CD4-positive, alpha-beta T cell (primary cell): ENCODE measurements at regions of chr14 and their contacts with region 1.

Region 1: GRCh38 chr14:73728717-73729330 is 14.6 kb upstream of the PNMA1 start:
- DNase-seq: peak; percentile 78 to 95 (median 88)
- ATAC-seq: peak; percentile 93
- H3K4me3 ChIP-seq: no peak overlapping the region
- H3K4me3 Mint-ChIP-seq: peak overlapping the region; percentile 21
- H3K27ac ChIP-seq: peak overlapping the region in 1 of 2 donors; percentile 22
- H3K27ac Mint-ChIP-seq: peak overlapping the region; percentile 84
- H3K4me1 ChIP-seq: peaks cover 36% of the 10 kb centered on the region
- H3K4me1 Mint-ChIP-seq: peaks cover 20% of the 10 kb centered on the region
- H3K27me3 ChIP-seq: no peaks in the 10 kb centered on the region
- H3K27me3 Mint-ChIP-seq: no peaks in the 10 kb centered on the region
- CTCF ChIP-seq: peak; percentile 94

Region 2: GRCh38 chr14:73713803-73714655 is 14.8 kb before region 1 on chr14 and contains the start of gene PNMA1:
- CTCF ChIA-PET with region 1: interaction called, 11 read pairs
- POLR2A ChIA-PET with region 1: interaction called, 4 read pairs
- intact Hi-C with region 1: no loop called
- DNase-seq: peak; percentile 75 to 95 (median 82)
- ATAC-seq: peak; percentile 68
- H3K4me3 ChIP-seq: peak within 1 kb of the TSS; percentile 87
- H3K4me3 Mint-ChIP-seq: peak within 1 kb of the TSS; percentile 96
- H3K27ac ChIP-seq: peak within 1 kb of the TSS; percentile 73 to 77
- H3K27ac Mint-ChIP-seq: peak within 1 kb of the TSS; percentile 92
- H3K4me1 ChIP-seq: peaks cover 33% of the 10 kb centered on the region
- H3K4me1 Mint-ChIP-seq: peaks cover 33% of the 10 kb centered on the region
- H3K27me3 ChIP-seq: no peaks in the 10 kb centered on the region
- H3K27me3 Mint-ChIP-seq: no peaks in the 10 kb centered on the region
- CTCF ChIP-seq: no peak
- total RNA-seq, gene PNMA1: 52.6 to 55.9 TPM

Region 3: DNA sequence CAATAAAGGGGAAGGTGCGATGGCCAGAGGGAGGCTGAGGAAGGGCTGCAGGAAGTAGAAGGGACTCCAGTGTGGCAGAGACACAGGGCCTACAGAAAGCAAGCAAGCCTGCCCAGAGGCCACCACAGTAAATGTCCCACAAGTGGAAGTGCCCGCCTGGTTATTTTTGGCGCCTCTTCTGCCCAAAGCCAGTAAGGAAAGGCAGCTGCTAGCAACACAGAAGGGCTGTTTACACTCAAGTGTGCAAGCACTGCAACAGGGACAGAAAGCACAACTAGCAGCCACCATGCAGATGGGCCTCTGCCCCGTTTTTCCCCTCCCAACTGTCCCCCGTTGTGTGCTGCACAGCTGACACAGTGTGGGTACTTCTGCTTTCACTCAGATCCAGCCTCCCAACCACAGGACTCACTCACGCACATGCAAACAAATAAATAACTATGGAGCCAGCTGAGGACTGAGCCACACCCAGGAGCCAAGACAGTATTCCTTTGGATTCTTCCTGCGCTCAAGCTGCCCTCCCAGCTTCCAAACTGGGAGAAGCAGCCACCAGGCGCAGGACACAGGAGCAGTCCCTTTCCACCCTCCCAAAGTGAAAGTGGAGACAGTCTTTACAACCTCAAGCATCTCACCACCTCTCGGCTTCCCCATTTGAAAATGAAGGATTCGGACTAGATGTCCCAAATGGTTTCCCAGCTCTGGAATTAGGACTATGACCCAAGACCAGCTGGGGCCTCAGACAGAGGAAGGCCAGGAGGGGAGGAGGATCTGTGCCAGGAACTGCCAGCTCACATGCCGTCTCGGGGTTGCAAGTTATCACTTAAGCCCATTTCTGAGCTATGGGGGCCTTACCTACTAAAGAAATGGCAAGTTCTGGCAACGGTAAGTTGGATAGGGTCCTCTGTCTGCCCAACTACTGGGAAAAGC is 25.4 kb after region 1 on chr14:
- CTCF ChIA-PET with region 1: interaction called, 30 read pairs
- POLR2A ChIA-PET with region 1: interaction called, 25 read pairs
- intact Hi-C with region 1: loop called (anchors 1 to 2 kb)
- DNase-seq: peak in 5 of 14 experiments; percentile 34 to 77 (median 45)
- ATAC-seq: peak; percentile 14
- H3K4me3 ChIP-seq: peak overlapping the region; percentile 57
- H3K4me3 Mint-ChIP-seq: peak overlapping the region; percentile 88
- H3K27ac ChIP-seq: peak overlapping the region; percentile 85 to 88
- H3K27ac Mint-ChIP-seq: peak overlapping the region; percentile 99
- H3K4me1 ChIP-seq: peaks cover 95% of the 10 kb centered on the region
- H3K4me1 Mint-ChIP-seq: peaks cover 95% of the 10 kb centered on the region
- H3K27me3 ChIP-seq: no peaks in the 10 kb centered on the region
- H3K27me3 Mint-ChIP-seq: no peaks in the 10 kb centered on the region
- CTCF ChIP-seq: no peak

Region 4: GRCh38 chr14:73777401-73777800 is 48.6 kb after region 1 on chr14:
- CTCF ChIA-PET with region 1: interaction called, 27 read pairs
- POLR2A ChIA-PET with region 1: interaction called, 7 read pairs
- intact Hi-C with region 1: loop called (anchors 1 to 2 kb)
- DNase-seq: peak in 6 of 14 experiments; percentile 28 to 69 (median 44)
- ATAC-seq: peak; percentile 72
- H3K4me3 ChIP-seq: no peak overlapping the region
- H3K4me3 Mint-ChIP-seq: peak overlapping the region; percentile 39
- H3K27ac ChIP-seq: peak overlapping the region in 1 of 2 donors; percentile 10
- H3K27ac Mint-ChIP-seq: peak overlapping the region; percentile 73
- H3K4me1 ChIP-seq: peaks cover 57% of the 10 kb centered on the region
- H3K4me1 Mint-ChIP-seq: peaks cover 70% of the 10 kb centered on the region
- H3K27me3 ChIP-seq: no peaks in the 10 kb centered on the region
- H3K27me3 Mint-ChIP-seq: no peaks in the 10 kb centered on the region
- CTCF ChIP-seq: no peak

Region 5: GRCh38 chr14:73825551-73826188 is 96.8 kb after region 1 on chr14:
- CTCF ChIA-PET with region 1: interaction called, 68 read pairs
- POLR2A ChIA-PET with region 1: interaction called, 14 read pairs
- intact Hi-C with region 1: loop called (anchors 1 kb)
- DNase-seq: peak; percentile 62 to 88 (median 76)
- ATAC-seq: peak; percentile 99
- H3K4me3 ChIP-seq: no peak overlapping the region
- H3K4me3 Mint-ChIP-seq: no peak overlapping the region
- H3K27ac ChIP-seq: no peak overlapping the region
- H3K27ac Mint-ChIP-seq: no peak overlapping the region
- H3K4me1 ChIP-seq: peaks cover 10% of the 10 kb centered on the region
- H3K4me1 Mint-ChIP-seq: no peaks in the 10 kb centered on the region
- H3K27me3 ChIP-seq: no peaks in the 10 kb centered on the region
- H3K27me3 Mint-ChIP-seq: no peaks in the 10 kb centered on the region
- CTCF ChIP-seq: peak; percentile 95

Region 6: DNA sequence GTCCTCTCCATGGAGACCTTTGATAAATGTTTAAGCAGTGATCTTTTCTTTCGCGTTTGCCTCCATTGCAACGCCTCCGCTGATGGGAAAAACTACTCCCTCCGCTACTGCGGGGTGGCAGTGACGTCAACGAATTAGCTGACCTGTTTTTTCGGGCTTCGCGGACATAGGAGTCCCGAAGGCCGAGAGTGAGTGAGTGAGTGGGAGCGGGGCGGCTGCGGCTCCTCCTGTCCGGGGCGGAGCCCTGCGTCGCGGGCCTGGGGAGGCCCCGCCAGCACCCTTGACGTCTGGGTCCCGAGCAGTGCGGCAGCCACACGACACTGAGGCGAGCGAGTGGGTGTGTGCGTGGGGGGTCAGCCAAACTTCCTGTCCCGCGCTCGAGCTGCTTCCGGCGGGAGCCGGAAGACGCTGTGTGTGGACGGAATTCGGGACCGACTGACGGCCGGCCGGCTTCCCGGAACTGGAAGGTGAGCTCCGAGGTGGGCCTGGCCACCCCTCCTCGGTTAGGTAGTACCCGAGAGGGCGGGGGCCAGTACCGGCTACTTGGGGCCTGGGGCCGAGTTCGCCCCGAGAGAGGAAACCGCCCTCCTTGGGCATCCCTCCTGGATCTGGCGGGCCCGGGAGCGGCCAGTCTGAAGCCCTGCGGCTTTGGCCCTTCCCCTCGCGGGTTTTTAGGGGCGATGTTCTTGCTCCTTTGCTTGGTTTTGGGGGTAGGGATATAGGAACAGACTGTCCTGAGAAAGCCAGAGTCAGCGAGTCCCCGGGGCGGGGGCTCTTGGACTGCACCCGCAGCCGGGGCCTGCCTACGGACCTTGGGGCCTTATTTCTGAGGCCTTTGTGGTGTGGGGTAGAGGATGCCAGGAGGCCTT is 157.9 kb after region 1 on chr14 and contains the start of gene ZNF410:
- CTCF ChIA-PET with region 1: no interaction called
- POLR2A ChIA-PET with region 1: interaction called, 3 read pairs
- intact Hi-C with region 1: loop called in 1 of 2 experiments (anchors 10 kb)
- DNase-seq: peak; percentile 66 to 96 (median 78)
- ATAC-seq: peak; percentile 97
- H3K4me3 ChIP-seq: peak within 1 kb of the TSS; percentile 98
- H3K4me3 Mint-ChIP-seq: peak within 1 kb of the TSS; percentile 98
- H3K27ac ChIP-seq: peak within 1 kb of the TSS; percentile 93 to 98
- H3K27ac Mint-ChIP-seq: peak within 1 kb of the TSS; percentile 94
- H3K4me1 ChIP-seq: peaks cover 21% of the 10 kb centered on the region
- H3K4me1 Mint-ChIP-seq: peaks cover 49% of the 10 kb centered on the region
- H3K27me3 ChIP-seq: no peaks in the 10 kb centered on the region
- H3K27me3 Mint-ChIP-seq: no peaks in the 10 kb centered on the region
- CTCF ChIP-seq: no peak
- total RNA-seq, gene ZNF410: 74.3 to 81.1 TPM